K562 (cell line): ENCODE measurements at regions of chr2 and their contacts with region 1.

Region 1: GRCh38 chr2:126776692-126777619 is 121.0 kb downstream of the GYPC start:
- DNase-seq: peak; percentile 78 to 85 (median 80)
- ATAC-seq: peak; percentile 95
- H3K4me3 ChIP-seq: peak overlapping the region; percentile 48
- H3K27ac ChIP-seq: no peak overlapping the region
- H3K4me1 ChIP-seq: peaks cover 4 to 20% of the 10 kb centered on the region in 2 experiments; a peak in 4 of 5 replicates
- H3K27me3 ChIP-seq: peaks cover 2 to 50% of the 10 kb centered on the region in 2 experiments; a peak in 3 of 5 replicates
- CTCF ChIP-seq: peak; percentile 91 to 97 (median 96)
- EP300 ChIP-seq: no peak
- POLR2A ChIP-seq: no peak
- RAD21 ChIP-seq: peak; percentile 97

Region 2: GRCh38 chr2:126244937-126245336 is 532.0 kb before region 1 on chr2:
- CTCF ChIA-PET with region 1: interaction called, 8 read pairs
- POLR2A ChIA-PET with region 1: no interaction called
- in situ Hi-C with region 1: loop called (anchors 25 kb)
- intact Hi-C with region 1: loop called (anchors 1 kb)
- DNase-seq: peak; percentile 34 to 80 (median 49)
- ATAC-seq: peak; percentile 98
- H3K4me3 ChIP-seq: no peak overlapping the region
- H3K27ac ChIP-seq: no peak overlapping the region
- H3K4me1 ChIP-seq: no peaks in the 10 kb centered on the region
- H3K27me3 ChIP-seq: no peaks in the 10 kb centered on the region
- CTCF ChIP-seq: peak; percentile 81 to 90 (median 87)
- EP300 ChIP-seq: no peak
- POLR2A ChIP-seq: no peak
- RAD21 ChIP-seq: peak; percentile 57 to 83

Region 3: GRCh38 chr2:126253669-126254068 is 523.3 kb before region 1 on chr2:
- CTCF ChIA-PET with region 1: no interaction called
- POLR2A ChIA-PET with region 1: no interaction called
- in situ Hi-C with region 1: loop called (anchors 25 kb)
- intact Hi-C with region 1: no loop called
- DNase-seq: no peak
- ATAC-seq: no peak
- H3K4me3 ChIP-seq: no peak overlapping the region
- H3K27ac ChIP-seq: no peak overlapping the region
- H3K4me1 ChIP-seq: no peaks in the 10 kb centered on the region
- H3K27me3 ChIP-seq: no peaks in the 10 kb centered on the region
- CTCF ChIP-seq: no peak
- EP300 ChIP-seq: no peak
- POLR2A ChIP-seq: no peak
- RAD21 ChIP-seq: no peak

Region 4: GRCh38 chr2:126614524-126615227 is 162.3 kb before region 1 on chr2:
- CTCF ChIA-PET with region 1: no interaction called
- POLR2A ChIA-PET with region 1: no interaction called
- in situ Hi-C with region 1: no loop called
- intact Hi-C with region 1: loop called (anchors 1 kb)
- DNase-seq: no peak
- ATAC-seq: peak; percentile 77
- H3K4me3 ChIP-seq: no peak overlapping the region
- H3K27ac ChIP-seq: no peak overlapping the region
- H3K4me1 ChIP-seq: no peaks in the 10 kb centered on the region
- H3K27me3 ChIP-seq: no peaks in the 10 kb centered on the region
- CTCF ChIP-seq: peak; percentile 23 to 59 (median 31); a peak in 4 of 6 replicates
- EP300 ChIP-seq: no peak
- POLR2A ChIP-seq: no peak
- RAD21 ChIP-seq: peak; percentile 52 to 61

Region 5: DNA sequence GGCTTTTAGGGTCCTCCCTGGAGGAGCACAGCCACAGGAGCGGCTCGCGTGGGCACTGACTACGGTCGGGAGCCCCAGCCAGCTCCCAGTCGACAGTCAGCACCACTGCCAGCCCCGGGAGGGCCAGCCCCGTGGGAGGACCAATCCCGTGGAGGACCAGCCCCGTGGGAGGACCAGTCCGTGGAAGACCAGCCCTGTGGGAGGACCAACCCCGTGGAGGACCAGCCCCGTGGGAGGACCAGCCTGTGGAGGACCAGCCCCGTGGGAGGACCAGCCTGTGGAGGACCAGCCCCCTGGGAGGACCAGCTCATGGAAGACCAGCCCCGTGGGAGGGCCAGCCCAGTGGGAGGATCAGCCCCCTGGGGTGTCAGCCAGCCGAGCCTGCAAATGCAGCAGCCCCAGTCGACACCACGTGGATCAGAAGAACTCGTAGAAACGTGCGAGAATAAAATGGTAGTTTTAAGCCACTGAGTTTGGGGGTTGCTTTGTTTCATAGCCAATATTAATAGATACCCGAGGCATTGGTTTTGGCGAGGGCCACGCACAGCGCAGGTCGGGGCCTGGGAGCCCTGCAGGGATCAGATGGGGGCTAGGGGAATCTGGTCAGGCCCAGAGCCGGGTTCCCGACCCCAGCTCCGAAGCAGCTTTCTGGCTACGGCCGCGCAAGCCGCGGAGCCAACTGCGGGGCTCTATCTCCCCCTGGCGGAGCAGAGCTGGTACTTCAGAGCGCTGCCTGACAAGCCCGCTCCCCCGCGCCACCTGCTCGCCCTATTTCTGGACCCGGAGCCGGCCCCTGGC is 194.7 kb after region 1 on chr2:
- CTCF ChIA-PET with region 1: no interaction called
- POLR2A ChIA-PET with region 1: no interaction called
- in situ Hi-C with region 1: no loop called
- intact Hi-C with region 1: loop called (anchors 5 kb)
- DNase-seq: peak; percentile 77 to 84 (median 80)
- ATAC-seq: peak; percentile 96
- H3K4me3 ChIP-seq: no peak overlapping the region
- H3K27ac ChIP-seq: no peak overlapping the region
- H3K4me1 ChIP-seq: peaks cover 0 to 22% of the 10 kb centered on the region in 2 experiments; a peak in 2 of 5 replicates
- H3K27me3 ChIP-seq: peaks cover 16 to 59% of the 10 kb centered on the region in 2 experiments; a peak in 4 of 5 replicates
- CTCF ChIP-seq: peak; percentile 86 to 92 (median 89)
- EP300 ChIP-seq: no peak
- POLR2A ChIP-seq: no peak
- RAD21 ChIP-seq: peak; percentile 84 to 90

Region 6: GRCh38 chr2:127034883-127035611 is 258.1 kb after region 1 on chr2:
- CTCF ChIA-PET with region 1: no interaction called
- POLR2A ChIA-PET with region 1: no interaction called
- in situ Hi-C with region 1: no loop called
- intact Hi-C with region 1: no loop called
- DNase-seq: no peak
- ATAC-seq: peak; percentile 53; the same call in 1 of the 3 replicates
- H3K4me3 ChIP-seq: no peak overlapping the region
- H3K27ac ChIP-seq: no peak overlapping the region
- H3K4me1 ChIP-seq: no peaks in the 10 kb centered on the region
- H3K27me3 ChIP-seq: peaks cover 18 to 42% of the 10 kb centered on the region in 2 experiments; a peak in 4 of 5 replicates
- CTCF ChIP-seq: no peak
- EP300 ChIP-seq: no peak
- POLR2A ChIP-seq: no peak
- RAD21 ChIP-seq: no peak

Region 7: DNA sequence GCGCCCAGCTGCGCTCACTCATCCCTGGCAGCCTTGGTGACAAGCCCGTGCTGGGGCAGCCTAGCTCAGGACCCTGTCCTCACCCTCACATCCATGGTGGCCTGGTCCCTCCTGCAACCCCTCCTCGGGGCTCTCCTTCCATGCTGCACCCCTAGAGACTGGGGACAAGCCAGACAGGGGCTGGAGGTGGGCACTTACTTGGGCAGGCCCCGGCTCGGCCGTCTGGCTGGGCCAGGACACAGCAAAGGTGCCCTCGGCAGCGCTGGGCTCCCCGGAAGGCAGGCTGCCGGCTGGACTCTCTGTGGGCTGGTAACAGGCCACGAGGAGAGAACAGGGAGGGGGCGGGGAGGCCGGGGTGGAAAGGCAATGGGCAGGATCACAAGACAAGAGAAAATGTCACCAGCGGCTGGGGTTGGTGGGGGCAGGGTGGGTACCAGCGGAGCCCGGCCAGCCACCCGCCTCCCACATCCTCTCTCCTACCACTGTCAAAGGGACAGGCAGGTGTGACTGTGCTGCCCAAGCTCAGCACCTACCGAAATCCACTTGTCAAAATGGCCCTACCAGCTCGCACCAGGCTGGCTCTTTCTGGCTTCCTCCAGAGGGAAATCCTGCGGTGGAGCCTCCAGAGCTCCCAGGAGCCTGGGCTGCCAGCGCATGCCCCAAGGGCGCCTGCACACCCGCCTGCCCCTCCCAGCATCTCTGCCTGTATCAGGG is 275.3 kb after region 1 on chr2:
- CTCF ChIA-PET with region 1: no interaction called
- POLR2A ChIA-PET with region 1: no interaction called
- in situ Hi-C with region 1: no loop called
- intact Hi-C with region 1: no loop called
- DNase-seq: no peak
- ATAC-seq: no peak
- H3K4me3 ChIP-seq: no peak overlapping the region
- H3K27ac ChIP-seq: no peak overlapping the region
- H3K4me1 ChIP-seq: peaks cover 0 to 67% of the 10 kb centered on the region in 2 experiments; a peak in 2 of 5 replicates
- H3K27me3 ChIP-seq: peaks cover 5 to 82% of the 10 kb centered on the region in 2 experiments; a peak in 4 of 5 replicates
- CTCF ChIP-seq: no peak
- EP300 ChIP-seq: no peak
- POLR2A ChIP-seq: no peak
- RAD21 ChIP-seq: no peak